ENCODE measurements at regions of chr1 and their contacts with region 1.

Region 1: GRCh38 chr1:151013518-151013917 is 5.3 kb downstream of the PRUNE1 start:
- DNase-seq: peak; percentile 68
- ATAC-seq: peak; percentile 58
- H3K4me3 ChIP-seq: peak overlapping the region; percentile 18 to 44 (median 39); a peak in 4 of 6 replicates
- H3K27ac ChIP-seq: peak overlapping the region; percentile 99
- H3K4me1 ChIP-seq: peaks cover 61% of the 10 kb centered on the region
- H3K27me3 ChIP-seq: no peaks in the 10 kb centered on the region; a peak in 1 of 5 replicates
- CTCF ChIP-seq: no peak
- EP300 ChIP-seq: no peak
- POLR2A ChIP-seq: no peak
- RAD21 ChIP-seq: no peak

Region 2: GRCh38 chr1:151059078-151059907 is 45.8 kb after region 1 on chr1 and contains the start of gene CDC42SE1:
- CTCF ChIA-PET with region 1: no interaction called
- POLR2A ChIA-PET with region 1: interaction called, 4 read pairs
- in situ Hi-C with region 1: no loop called
- intact Hi-C with region 1: loop called (anchors 2 kb)
- DNase-seq: peak; percentile 67
- ATAC-seq: peak; percentile 96
- H3K4me3 ChIP-seq: peak within 1 kb of the TSS; percentile 83 to 96 (median 88)
- H3K27ac ChIP-seq: peak within 1 kb of the TSS; percentile 56
- H3K4me1 ChIP-seq: peaks cover 50% of the 10 kb centered on the region
- H3K27me3 ChIP-seq: 0 out of 5 replicates have a peak, but pooled peaks cover 0 to 3% of the 10 kb centered on the region in 2 experiments
- CTCF ChIP-seq: peak; percentile 89
- EP300 ChIP-seq: no peak
- POLR2A ChIP-seq: peak; percentile 38 to 77; a peak in 3 of 4 replicates
- RAD21 ChIP-seq: peak; percentile 66; the same call in 1 of the 2 replicates
- total RNA-seq, gene CDC42SE1: 17.6 and 18.8 TPM in 2 replicates

Region 3: GRCh38 chr1:151098126-151098525 is 84.6 kb after region 1 on chr1:
- CTCF ChIA-PET with region 1: no interaction called
- POLR2A ChIA-PET with region 1: no interaction called
- in situ Hi-C with region 1: no loop called
- intact Hi-C with region 1: no loop called
- DNase-seq: no peak
- ATAC-seq: no peak
- H3K4me3 ChIP-seq: no peak overlapping the region
- H3K27ac ChIP-seq: no peak overlapping the region
- H3K4me1 ChIP-seq: no peaks in the 10 kb centered on the region
- H3K27me3 ChIP-seq: no peaks in the 10 kb centered on the region; a peak in 1 of 5 replicates
- CTCF ChIP-seq: no peak
- EP300 ChIP-seq: no peak
- POLR2A ChIP-seq: no peak
- RAD21 ChIP-seq: no peak

Region 4: DNA sequence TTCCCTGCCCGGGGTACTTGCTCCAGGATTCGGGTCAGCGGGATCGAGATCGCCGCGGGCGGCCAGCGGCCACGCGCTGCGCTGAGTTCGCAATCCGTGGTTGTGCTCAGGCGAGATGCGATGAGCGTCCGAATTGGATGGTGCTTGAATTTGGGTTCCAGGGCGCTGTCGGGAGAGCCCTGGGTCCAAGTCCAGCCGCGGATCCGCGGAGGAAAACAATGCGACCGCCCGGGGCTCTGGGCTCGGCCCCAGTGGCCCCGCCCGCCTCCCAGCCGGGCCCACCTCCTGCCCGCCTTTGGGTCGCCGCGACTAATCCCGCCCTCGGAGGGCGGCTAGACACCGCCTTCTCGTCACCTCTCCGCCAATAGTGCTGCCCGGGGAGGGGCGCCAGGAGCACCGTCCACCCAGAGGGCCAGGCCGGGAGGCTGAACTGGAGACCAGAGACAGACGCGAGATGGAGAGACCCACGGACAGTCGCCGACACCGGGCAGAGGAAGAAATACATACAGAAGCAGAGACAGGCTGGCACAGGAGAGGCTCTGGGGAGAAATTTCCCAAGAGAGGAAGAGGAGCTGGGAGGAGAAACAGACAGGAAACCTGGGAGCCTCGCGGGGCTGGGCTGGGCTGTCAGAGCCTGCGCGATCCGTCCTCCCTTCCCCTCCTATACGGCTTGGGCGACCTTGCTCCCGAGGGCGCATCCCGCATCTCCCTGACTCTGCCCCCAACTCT is 133.1 kb after region 1 on chr1 and contains the start of gene SEMA6C:
- CTCF ChIA-PET with region 1: no interaction called
- POLR2A ChIA-PET with region 1: no interaction called
- in situ Hi-C with region 1: no loop called
- intact Hi-C with region 1: loop called (anchors 5 kb)
- DNase-seq: peak; percentile 82
- ATAC-seq: peak; percentile 98
- H3K4me3 ChIP-seq: peak within 1 kb of the TSS; percentile 73 to 77 (median 77)
- H3K27ac ChIP-seq: peak within 1 kb of the TSS; percentile 55
- H3K4me1 ChIP-seq: peaks cover 33% of the 10 kb centered on the region
- H3K27me3 ChIP-seq: no peaks in the 10 kb centered on the region
- CTCF ChIP-seq: 0 out of 2 replicates have a peak, but pooled peaks have one; percentile 2
- EP300 ChIP-seq: no peak
- POLR2A ChIP-seq: peak; percentile 57 to 89; a peak in 3 of 4 replicates
- RAD21 ChIP-seq: no peak
- total RNA-seq, gene SEMA6C: 0.80 and 1.4 TPM in 2 replicates

Region 5: GRCh38 chr1:151157067-151157531 is 143.6 kb after region 1 on chr1:
- CTCF ChIA-PET with region 1: no interaction called
- POLR2A ChIA-PET with region 1: no interaction called
- in situ Hi-C with region 1: no loop called
- intact Hi-C with region 1: no loop called
- DNase-seq: no peak
- ATAC-seq: no peak
- H3K4me3 ChIP-seq: no peak overlapping the region
- H3K27ac ChIP-seq: no peak overlapping the region
- H3K4me1 ChIP-seq: peaks cover 8% of the 10 kb centered on the region
- H3K27me3 ChIP-seq: no peaks in the 10 kb centered on the region
- CTCF ChIP-seq: no peak
- EP300 ChIP-seq: no peak
- POLR2A ChIP-seq: no peak
- RAD21 ChIP-seq: no peak